Mammary epithelial cell (primary cell): ENCODE measurements at regions of chr3 and their contacts with region 1.

Region 1: DNA sequence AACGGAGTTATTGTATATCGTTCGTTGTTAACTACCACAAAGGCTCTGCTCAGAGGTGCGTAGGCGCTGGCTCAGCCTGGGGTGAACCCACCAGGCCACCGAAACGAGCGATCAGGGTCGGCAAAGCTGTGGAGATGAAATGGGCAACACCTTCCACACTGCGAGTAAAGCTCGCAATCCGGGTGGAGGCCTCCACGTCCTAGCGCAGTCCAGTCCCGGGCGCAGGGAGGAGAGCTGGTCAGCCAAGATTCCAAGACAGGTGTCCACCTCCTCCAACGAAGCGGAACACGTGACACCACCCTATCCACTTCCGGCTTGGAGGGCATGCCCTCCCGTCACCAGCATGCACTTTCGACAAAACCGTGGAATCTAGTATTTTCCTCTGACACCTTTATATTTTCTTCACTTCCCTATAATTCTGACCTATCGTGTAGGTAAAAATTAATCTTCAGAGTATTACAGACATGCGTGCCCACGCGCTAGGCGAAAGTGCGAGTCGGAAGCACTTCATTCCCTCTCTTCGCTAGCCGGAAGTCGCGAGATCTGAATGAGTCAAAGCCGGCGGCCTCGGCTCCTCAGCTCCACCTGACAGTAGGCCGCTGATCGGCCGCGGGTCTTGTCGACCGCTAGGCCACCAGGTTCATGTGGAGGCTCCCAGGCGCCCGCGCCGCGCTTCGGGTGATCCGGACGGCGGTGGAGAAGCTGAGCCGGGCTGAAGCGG is at the start of gene PDE12:
- DNase-seq: peak; percentile 92
- H3K4me3 ChIP-seq: peak within 1 kb of the TSS; percentile 61 to 81 (median 76)
- H3K27ac ChIP-seq: peak within 1 kb of the TSS; percentile 88
- H3K4me1 ChIP-seq: peaks cover 20% of the 10 kb centered on the region
- H3K27me3 ChIP-seq: no peaks in the 10 kb centered on the region
- CTCF ChIP-seq: peak in 1 of 2 donors; percentile 10
- total RNA-seq, gene PDE12: 22.4 to 26.7 TPM

Region 2: DNA sequence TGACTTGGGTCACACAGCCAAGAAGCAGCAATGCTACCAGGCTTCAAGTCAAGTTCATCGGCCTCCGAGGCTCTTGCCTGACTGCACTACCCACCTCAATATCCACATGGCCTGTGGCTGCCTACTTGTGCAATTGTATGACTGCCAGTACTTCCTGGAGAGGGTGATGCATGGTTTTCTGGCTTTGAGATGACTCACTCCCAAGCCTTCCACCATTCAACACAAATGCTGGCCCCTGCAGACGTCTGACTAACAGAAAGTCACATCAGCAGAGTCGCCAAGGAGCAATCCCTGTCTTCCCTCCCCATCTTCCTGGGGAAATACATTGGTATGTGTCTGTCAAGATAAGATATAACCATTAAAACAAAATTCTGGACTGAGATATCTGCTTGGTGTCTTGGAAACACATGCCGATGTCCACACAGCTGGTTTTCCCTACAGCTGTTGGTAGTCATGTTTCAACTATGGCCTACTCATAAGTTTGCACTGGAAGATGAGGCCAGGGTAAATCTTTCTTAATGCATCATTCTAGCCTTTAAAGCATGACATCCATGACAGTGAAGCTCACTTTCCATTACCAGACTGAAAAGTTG is 575.0 kb before region 1 on chr3:
- CTCF ChIA-PET with region 1: no interaction called
- dilution Hi-C with region 1: no loop called
- in situ Hi-C with region 1: no loop called
- intact Hi-C with region 1: no loop called
- DNase-seq: peak; percentile 95
- H3K4me3 ChIP-seq: no peak overlapping the region
- H3K27ac ChIP-seq: peak overlapping the region; percentile 17
- H3K4me1 ChIP-seq: peaks cover 17% of the 10 kb centered on the region
- H3K27me3 ChIP-seq: no peaks in the 10 kb centered on the region
- CTCF ChIP-seq: no peak

Region 3: GRCh38 chr3:57169872-57170623 is 385.9 kb before region 1 on chr3:
- CTCF ChIA-PET with region 1: no interaction called
- dilution Hi-C with region 1: no loop called
- in situ Hi-C with region 1: no loop called
- intact Hi-C with region 1: loop called (anchors 5 kb)
- DNase-seq: peak; percentile 48
- H3K4me3 ChIP-seq: peak overlapping the region; percentile 35 to 44 (median 41)
- H3K27ac ChIP-seq: no peak overlapping the region
- H3K4me1 ChIP-seq: peaks cover 5% of the 10 kb centered on the region
- H3K27me3 ChIP-seq: no peaks in the 10 kb centered on the region
- CTCF ChIP-seq: peak; percentile 46 to 79

Region 4: DNA sequence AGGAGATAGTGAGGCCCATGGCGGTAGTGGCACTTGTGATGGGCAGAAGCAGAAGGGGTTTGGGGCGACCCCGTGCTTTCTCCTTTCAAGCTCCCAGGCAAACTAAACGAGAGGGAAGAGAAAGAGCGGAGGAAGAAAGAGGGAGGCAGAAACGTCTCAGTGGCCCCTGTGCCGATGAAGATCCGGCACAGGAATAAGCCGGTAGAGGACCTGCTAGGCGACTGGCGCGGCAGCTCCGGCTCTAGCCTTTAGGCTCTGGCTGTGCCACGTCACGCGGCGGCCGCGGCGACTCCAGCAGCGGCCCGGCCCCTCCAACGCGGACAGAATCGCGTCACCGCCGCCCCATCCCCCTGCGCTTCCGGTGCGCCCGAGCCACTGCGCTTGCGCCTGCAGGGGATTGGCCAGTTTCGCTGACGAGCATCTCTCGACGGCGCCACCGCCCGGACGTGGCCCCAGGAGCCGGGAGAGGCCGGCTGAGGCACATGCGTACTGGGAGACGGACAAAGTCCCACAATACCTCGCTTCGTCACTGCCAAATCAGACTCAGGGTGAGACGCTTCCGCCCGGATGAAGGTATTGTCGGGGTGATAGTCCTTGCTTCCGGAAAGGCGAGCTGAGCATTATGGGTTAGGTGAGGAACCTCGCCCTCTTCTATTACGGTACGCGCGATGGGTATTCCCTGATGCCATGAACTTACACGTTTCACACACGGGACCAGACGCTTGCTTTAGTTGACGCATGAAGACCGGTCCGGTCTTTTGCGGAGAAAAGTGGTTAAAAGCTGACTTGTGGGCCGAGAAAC is 41.4 kb after region 1 on chr3 and contains the start of gene ARF4:
- CTCF ChIA-PET with region 1: no interaction called
- dilution Hi-C with region 1: loop called (anchors 5 kb)
- in situ Hi-C with region 1: no loop called
- intact Hi-C with region 1: loop called (anchors 2 kb)
- DNase-seq: peak; percentile 100
- H3K4me3 ChIP-seq: peak within 1 kb of the TSS; percentile 85 to 98 (median 97)
- H3K27ac ChIP-seq: peak within 1 kb of the TSS; percentile 99
- H3K4me1 ChIP-seq: peaks cover 29% of the 10 kb centered on the region
- H3K27me3 ChIP-seq: no peaks in the 10 kb centered on the region
- CTCF ChIP-seq: peak in 1 of 2 donors; percentile 24
- total RNA-seq, gene ARF4: 202 to 208 TPM

Region 5: GRCh38 chr3:58349792-58350626 is 794.1 kb after region 1 on chr3:
- CTCF ChIA-PET with region 1: no interaction called
- dilution Hi-C with region 1: no loop called
- in situ Hi-C with region 1: no loop called
- intact Hi-C with region 1: no loop called
- DNase-seq: no peak
- H3K4me3 ChIP-seq: no peak overlapping the region
- H3K27ac ChIP-seq: no peak overlapping the region
- H3K4me1 ChIP-seq: no peaks in the 10 kb centered on the region
- H3K27me3 ChIP-seq: no peaks in the 10 kb centered on the region
- CTCF ChIP-seq: no peak